ENCODE measurements at regions of chr3 and their contacts with region 1.

Region 1: DNA sequence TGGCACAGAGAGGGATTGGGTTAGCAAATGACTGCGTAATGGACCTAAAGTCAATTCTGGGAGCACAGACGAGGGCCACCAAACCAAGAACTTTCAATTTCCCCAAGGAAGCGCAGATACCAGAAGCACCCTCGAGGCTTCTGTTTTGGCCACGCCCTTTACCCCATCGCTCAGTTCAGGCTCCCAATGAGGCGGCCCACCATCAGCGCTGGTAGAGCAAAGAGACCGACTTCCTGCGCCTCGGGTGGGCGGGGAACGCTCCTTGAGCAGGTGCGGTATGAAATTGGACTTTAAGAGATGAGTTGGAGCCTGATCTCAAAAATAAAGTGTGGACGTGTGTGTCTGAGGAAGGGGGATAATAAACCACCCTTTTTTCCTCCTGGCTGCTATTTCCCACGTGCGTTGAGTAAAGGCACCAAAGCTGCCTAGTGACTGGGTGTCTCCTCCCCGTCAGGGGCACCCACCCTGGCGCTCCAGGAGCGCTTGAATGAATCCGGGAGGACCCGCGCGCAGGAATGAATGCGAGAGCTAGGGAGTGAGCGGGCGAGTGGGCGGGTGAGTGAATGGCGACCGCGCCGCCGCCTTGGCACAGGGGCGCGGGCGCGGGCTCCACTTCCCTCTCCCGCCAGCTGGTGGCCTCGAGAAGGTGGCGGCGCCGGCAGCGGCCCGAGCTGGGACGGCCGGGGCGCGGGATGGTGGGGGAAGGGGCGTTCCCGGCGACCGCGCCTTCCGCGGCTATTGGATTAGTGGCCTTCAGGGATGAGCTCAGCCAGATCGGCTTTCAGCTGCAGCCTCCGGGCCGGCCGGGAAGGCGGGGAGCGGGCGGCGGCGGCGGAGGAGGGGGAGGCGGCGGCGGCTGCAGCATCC is at the start of gene SPSB4:
- DNase-seq: peak; percentile 56
- H3K4me3 Mint-ChIP-seq: peak within 1 kb of the TSS; percentile 57
- H3K27ac Mint-ChIP-seq: no peak within 1 kb of the TSS
- H3K4me1 Mint-ChIP-seq: peaks cover 11% of the 10 kb centered on the region
- H3K27me3 Mint-ChIP-seq: peaks cover 61% of the 10 kb centered on the region
- CTCF ChIP-seq: peak; percentile 16
- total RNA-seq, gene SPSB4: not detected in 2 replicates

Region 2: GRCh38 chr3:141039589-141039988 is 11.2 kb before region 1 on chr3:
- CTCF ChIA-PET with region 1: interaction called, 11 read pairs
- POLR2A ChIA-PET with region 1: interaction called, 3 read pairs
- intact Hi-C with region 1: no loop called
- DNase-seq: no peak
- H3K4me3 Mint-ChIP-seq: no peak overlapping the region
- H3K27ac Mint-ChIP-seq: no peak overlapping the region
- H3K4me1 Mint-ChIP-seq: no peaks in the 10 kb centered on the region
- H3K27me3 Mint-ChIP-seq: peaks cover 18% of the 10 kb centered on the region
- CTCF ChIP-seq: no peak